Breast epithelium (tissue), 4 donors: ENCODE measurements at regions of chr4 and their contacts with region 1.

Region 1: DNA sequence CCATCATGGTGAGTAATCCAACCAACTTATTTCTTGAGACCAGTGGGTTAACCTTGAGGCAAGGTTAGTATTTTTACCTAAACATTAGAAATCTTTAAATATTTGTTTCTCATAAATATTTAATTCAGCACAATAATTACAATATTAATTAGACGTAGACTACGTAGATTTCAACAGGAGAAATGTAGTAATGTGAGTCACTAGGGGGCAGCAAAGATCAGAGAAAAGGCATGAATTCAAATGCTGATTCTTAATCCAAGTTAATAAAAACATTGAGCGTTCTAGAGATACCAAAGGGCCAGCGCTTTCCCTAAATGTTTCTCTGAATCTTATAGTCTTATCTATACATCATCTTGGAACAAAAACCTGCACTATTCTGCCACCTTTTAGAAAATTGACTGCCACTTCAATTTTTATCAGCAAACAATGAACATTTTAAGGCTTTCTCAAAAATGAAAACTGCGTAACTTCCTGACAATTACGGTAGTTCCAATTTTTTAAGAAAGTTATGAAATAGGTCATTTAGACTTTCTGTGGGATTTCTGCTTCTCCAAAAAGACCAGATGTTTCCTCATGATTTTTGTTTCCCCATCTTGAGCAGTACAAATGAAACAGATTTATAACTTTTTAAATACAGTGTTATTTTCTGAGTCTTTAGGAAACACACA is 180.7 kb downstream of the GASK1B start:
- DNase-seq: no peak
- H3K4me3 ChIP-seq: peak overlapping the region; percentile 32 to 37 (median 37)
- H3K27ac ChIP-seq: peak overlapping the region; percentile 43 to 62
- H3K4me1 ChIP-seq: no peaks in the 10 kb centered on the region
- H3K27me3 ChIP-seq: no peaks in the 10 kb centered on the region
- CTCF ChIP-seq: peak; percentile 61 to 85 (median 76)
- POLR2A ChIP-seq: no peak

Region 2: DNA sequence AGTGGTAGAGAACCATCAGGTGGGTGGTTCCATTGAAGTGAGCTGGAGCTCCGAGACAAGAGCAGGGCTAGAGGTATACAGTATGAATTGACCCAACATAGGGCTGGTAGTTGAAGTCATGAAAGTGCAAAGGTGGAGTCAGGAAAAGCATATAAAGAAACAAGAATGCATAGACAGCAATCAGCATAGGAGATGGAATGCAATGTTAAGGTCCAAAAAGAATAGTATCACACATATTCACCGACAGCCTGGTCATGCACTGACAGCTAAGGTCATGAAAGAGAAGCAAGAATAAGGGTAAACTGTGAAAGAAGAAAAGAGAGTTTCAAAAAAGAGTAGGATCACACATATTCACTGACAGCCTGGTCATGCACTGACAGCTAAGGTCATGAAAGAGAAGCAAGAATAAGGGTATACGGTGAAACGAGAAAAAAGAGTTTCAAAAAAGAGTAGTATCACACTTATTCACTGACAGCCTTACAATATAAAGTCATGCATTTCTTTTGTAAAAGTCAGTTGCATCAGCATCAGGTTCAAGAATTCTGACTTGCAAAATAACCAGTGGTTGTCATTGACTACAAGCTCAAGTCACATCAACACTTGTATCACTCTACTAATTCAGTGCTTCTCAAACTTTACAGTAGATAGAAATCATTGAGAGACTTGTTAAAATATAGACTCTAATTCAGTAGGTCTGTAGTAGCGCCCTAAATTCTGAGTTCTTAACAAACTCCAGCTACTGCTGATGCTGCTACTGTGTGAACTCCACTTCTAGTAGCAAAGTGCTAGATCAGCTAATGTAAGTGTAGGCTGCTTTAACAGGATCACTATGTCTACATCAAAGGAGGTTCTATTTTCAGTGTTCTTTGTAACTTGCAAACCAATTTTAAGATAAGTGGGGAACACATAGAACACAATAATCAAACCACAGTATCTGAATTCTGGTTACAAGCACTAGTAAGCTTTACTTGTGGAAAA is 1242.5 kb before region 1 on chr4:
- intact Hi-C with region 1: loop called (anchors 5 kb)
- DNase-seq: no peak
- H3K4me3 ChIP-seq: no peak overlapping the region
- H3K27ac ChIP-seq: no peak overlapping the region
- H3K4me1 ChIP-seq: no peaks in the 10 kb centered on the region
- H3K27me3 ChIP-seq: no peaks in the 10 kb centered on the region
- CTCF ChIP-seq: no peak
- POLR2A ChIP-seq: no peak

Region 3: DNA sequence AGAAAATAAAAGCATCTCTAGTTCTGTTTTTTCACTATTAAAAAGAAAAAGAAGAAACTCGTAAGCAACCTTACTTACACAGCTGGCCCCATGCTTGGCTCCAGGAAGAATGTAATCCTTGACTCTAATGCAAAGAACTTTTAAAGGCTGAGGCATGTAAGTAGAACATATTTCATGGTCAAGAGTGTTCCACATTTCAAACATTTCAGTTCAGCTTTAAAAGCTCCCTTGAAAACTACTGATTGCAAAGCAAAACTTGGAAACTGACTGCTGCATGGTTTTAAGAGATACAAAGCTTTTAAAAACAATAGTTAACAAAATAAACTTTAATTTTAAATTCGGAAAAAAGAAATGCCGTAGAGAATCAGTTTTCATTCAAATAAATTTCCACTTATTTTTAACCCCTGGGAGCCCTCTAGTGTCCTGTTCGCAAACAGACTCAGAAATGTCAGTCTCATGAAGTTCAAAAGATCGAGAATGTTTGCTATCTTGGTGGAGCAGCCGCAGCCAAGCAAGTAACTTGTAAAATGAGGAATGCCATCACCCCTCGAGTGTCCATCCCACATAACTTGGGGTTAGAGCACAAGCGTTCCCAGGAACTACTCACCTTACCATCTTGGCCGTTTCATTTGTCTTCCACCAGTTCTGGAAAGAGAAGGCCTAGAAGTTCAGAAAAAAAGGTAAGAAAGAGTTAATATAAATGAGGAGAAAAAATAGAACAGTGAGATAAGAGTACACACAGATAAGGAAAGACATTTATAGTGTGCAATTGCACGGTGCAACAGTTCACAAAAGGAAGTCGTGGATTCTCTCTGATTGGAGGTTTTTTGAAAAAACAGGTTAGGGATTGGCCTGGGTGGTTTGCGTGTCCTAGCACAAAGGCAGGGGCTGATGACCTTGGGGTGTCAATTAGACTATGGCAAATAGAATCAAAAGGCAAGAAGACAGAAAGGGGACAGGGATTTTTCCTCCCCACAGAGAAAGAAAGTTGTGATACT is 180.4 kb after region 1 on chr4 and contains the start of gene GASK1B:
- intact Hi-C with region 1: loop called (anchors 10 kb)
- DNase-seq: no peak
- H3K4me3 ChIP-seq: peak within 1 kb of the TSS; percentile 51 to 81 (median 64)
- H3K27ac ChIP-seq: peak within 1 kb of the TSS; percentile 81 to 88
- H3K4me1 ChIP-seq: peaks cover 0 to 12% of the 10 kb centered on the region in 2 donors
- H3K27me3 ChIP-seq: no peaks in the 10 kb centered on the region
- CTCF ChIP-seq: peak; percentile 17 to 45 (median 28)
- POLR2A ChIP-seq: no peak
- total RNA-seq, gene GASK1B: 69.3 to 71.1 (median 70.4) TPM